MCF 10A (cell line): ENCODE measurements at regions of chr4 and their contacts with region 1.

Region 1: GRCh38 chr4:26860157-26860921 is at the start of gene STIM2:
- DNase-seq: peak; percentile 97
- H3K4me3 Mint-ChIP-seq: peak within 1 kb of the TSS; percentile 88
- H3K27ac Mint-ChIP-seq: peak within 1 kb of the TSS; percentile 95
- H3K4me1 Mint-ChIP-seq: peaks cover 43% of the 10 kb centered on the region
- H3K27me3 Mint-ChIP-seq: no peaks in the 10 kb centered on the region
- CTCF ChIP-seq: no peak
- total RNA-seq, gene STIM2: 17.4 and 18.5 TPM in 2 replicates

Region 2: DNA sequence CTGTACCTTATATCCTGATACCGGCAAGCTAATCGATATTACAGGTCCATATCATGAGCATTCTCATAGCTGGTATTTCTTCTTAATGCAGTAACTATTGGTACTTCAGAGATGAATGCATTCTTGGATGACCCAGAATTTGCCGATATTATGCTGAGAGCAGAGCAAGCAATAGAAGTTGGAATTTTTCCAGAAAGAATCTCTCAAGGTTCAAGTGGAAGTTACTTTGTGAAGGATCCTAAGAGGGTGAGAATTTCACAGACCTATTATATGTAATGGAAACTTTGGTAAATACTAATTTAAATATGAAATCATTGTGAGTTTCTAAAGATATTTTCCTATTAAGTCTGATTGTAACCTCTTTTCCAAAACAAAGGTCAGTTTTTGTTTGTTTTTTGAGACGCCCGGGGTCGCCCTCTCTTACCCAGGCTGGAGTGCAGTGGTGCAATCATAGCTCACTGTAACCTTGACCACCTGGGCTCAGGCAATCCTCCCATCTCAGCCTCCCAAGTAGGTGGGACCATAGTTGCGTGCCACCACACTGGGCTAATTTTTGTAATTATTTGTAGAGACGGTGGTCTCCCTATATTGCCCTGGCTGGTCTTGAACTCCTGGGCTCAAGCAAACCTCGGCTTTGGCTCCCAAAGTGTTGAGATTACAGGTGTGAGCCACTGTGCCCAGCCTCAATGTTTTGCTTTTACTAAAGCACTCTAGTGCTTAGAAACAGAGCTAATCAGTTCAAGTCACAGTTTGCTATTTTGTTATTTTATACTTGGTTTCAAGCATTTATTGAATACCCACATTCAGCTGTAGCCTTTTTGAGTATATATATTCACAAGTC is 1607.9 kb before region 1 on chr4:
- CTCF ChIA-PET with region 1: no interaction called
- POLR2A ChIA-PET with region 1: no interaction called
- intact Hi-C with region 1: no loop called
- DNase-seq: no peak
- H3K4me3 Mint-ChIP-seq: no peak overlapping the region
- H3K27ac Mint-ChIP-seq: no peak overlapping the region
- H3K4me1 Mint-ChIP-seq: peaks cover 16% of the 10 kb centered on the region
- H3K27me3 Mint-ChIP-seq: no peaks in the 10 kb centered on the region
- CTCF ChIP-seq: no peak

Region 3: DNA sequence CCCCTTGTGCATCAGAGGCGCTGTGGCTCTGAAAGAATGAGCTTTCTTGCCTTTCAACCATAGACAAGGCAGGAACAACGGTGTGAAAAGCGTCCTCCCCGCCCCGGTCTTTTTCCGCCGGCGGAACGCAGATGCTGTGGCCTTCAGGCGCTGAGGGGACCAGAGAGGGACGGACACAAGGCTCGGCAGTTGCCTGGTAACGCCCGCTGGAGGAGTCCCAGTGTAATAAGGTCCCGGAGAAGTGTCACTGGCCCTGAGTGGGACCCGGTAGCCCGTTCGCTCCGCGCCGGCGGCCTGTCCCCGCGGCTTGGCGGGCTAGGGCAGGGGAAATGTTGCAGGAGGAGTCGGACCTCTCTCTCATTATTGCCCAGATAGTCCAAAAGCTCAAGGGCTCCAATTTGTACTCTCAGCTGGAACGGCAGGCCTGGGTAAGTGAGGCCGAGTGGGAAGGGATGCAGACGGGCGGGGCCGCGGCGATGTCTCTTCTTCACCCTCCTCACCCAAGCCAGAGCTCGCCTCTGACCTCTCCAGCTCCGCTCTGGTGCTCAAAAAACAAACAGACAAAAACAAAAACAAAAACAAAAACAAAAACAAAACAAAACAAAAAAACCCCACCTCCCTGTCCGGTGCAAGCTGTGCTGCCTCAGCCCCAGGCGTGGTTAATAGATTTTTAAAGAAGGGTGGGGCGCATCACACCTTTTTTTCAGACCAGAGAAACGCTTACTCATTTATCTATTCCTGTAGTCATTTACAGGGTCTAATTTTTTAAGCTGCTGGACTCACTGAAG is 276.3 kb before region 1 on chr4 and contains the start of gene TBC1D19:
- CTCF ChIA-PET with region 1: no interaction called
- POLR2A ChIA-PET with region 1: interaction called, 14 read pairs
- intact Hi-C with region 1: no loop called
- DNase-seq: peak; percentile 87
- H3K4me3 Mint-ChIP-seq: peak within 1 kb of the TSS; percentile 92
- H3K27ac Mint-ChIP-seq: peak within 1 kb of the TSS; percentile 95
- H3K4me1 Mint-ChIP-seq: peaks cover 17% of the 10 kb centered on the region
- H3K27me3 Mint-ChIP-seq: no peaks in the 10 kb centered on the region
- CTCF ChIP-seq: no peak
- total RNA-seq, gene TBC1D19: 9.1 and 9.6 TPM in 2 replicates

Region 4: DNA sequence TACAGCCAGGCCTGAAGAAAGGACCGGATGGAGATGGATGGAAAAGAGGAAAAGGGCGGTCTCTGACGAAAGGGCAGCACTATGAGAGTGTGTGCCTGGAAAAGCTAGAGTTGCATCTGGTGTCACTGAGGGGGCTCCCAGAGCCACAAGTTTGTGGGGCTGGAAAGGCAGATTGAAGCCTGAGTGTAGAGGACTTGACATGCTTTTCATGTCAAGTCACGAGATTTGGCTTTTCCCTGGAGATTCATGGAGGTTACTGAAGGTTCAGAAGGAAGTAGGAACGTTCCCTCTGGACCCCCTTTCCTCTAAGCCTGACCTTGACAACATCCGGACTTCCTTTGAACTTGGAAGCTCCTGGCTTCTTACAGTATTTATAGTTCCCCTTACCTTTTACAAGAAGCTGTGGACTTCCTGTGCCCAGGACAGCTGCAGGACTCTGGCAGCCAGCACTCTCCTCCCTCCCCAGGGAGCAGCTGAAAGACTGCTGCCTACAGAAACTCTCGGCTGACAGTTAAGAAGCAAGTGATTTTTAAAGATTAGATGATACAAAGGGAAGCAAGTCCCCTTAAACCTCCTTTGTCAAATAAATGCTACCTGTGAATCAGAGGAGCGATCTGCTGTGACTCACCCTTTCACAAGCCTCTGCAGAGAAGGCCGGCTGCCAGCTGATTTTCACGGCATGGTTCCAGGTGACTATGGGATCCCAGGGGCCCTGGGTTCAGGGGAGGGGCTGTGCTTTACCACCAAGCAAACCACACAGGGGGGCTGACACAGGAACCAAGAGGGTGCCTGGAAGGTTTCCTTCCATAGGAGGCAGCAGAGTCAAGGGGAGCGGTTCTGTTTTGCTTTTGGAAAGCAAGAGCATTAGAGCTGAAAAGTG is 72.6 kb before region 1 on chr4:
- CTCF ChIA-PET with region 1: no interaction called
- POLR2A ChIA-PET with region 1: interaction called, 18 read pairs
- intact Hi-C with region 1: loop called (anchors 5 kb)
- DNase-seq: peak; percentile 88
- H3K4me3 Mint-ChIP-seq: peak overlapping the region; percentile 46
- H3K27ac Mint-ChIP-seq: peak overlapping the region; percentile 83
- H3K4me1 Mint-ChIP-seq: peaks cover 12% of the 10 kb centered on the region
- H3K27me3 Mint-ChIP-seq: no peaks in the 10 kb centered on the region
- CTCF ChIP-seq: no peak

Region 5: DNA sequence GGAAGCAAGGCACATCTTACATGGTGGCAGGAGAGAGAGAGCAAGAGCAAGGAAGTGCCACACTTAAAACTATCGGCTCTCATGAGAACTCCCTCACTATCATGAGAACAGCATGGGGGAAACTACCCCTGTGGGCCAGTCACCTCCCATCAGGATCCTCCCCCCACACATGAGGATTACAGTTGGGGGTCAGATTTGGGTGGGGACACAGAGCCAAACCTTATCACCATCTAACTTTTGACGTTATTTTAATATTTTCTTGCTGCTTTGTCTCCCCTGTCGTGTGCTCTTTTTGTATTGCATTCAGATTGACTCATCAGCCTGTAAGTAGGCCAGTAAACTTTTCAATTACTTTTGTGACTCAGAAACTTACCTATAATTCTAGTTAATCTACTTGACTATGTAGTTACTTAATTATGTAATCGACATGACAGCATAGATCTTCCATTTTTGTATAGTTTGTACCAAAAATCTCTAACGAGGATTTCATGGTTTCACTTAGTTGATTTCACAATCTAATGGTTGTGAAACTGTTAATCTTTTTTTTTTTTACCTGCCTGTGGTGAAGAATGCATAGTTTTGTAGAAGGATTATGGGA is 18.6 kb after region 1 on chr4:
- CTCF ChIA-PET with region 1: interaction called, 3 read pairs
- POLR2A ChIA-PET with region 1: interaction called, 97 read pairs
- intact Hi-C with region 1: no loop called
- DNase-seq: peak; percentile 57
- H3K4me3 Mint-ChIP-seq: peak overlapping the region; percentile 50
- H3K27ac Mint-ChIP-seq: peak overlapping the region; percentile 87
- H3K4me1 Mint-ChIP-seq: peaks cover 18% of the 10 kb centered on the region
- H3K27me3 Mint-ChIP-seq: no peaks in the 10 kb centered on the region
- CTCF ChIP-seq: no peak

Region 6: DNA sequence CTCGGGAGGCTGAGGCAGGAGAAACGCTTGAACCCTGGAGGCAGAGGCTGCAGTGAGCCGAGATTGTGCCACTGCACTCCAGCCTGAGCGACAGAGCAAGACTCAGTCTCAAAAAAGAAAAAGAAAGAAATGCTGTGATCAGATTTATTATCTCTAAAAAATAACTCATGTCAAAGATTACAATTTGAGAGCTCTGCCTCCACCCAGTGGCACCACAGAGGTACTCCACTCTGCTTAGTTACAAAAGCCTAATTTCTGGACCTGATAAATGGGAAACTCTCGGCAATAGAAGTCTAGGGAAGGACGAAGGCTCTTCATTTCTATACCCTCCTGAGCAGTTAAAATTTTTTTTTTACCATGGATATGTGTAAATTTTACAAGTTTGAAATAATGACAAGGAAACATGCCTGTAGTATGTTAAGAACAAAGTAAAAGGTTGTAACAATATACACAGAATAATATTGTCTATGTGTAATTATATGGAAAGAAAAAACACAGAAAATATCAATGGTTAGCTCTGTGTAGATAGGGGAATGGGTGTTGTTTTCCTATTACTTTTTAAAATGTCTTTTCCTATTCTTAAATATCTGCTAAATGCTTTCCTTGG is 150.1 kb after region 1 on chr4:
- CTCF ChIA-PET with region 1: interaction called, 8 read pairs
- POLR2A ChIA-PET with region 1: interaction called, 75 read pairs
- intact Hi-C with region 1: loop called (anchors 2 kb)
- DNase-seq: peak; percentile 59
- H3K4me3 Mint-ChIP-seq: no peak overlapping the region
- H3K27ac Mint-ChIP-seq: peak overlapping the region; percentile 39
- H3K4me1 Mint-ChIP-seq: no peaks in the 10 kb centered on the region
- H3K27me3 Mint-ChIP-seq: no peaks in the 10 kb centered on the region
- CTCF ChIP-seq: peak; percentile 71